ENCODE measurements at regions of chr11 and their contacts with region 1.

Region 1: DNA sequence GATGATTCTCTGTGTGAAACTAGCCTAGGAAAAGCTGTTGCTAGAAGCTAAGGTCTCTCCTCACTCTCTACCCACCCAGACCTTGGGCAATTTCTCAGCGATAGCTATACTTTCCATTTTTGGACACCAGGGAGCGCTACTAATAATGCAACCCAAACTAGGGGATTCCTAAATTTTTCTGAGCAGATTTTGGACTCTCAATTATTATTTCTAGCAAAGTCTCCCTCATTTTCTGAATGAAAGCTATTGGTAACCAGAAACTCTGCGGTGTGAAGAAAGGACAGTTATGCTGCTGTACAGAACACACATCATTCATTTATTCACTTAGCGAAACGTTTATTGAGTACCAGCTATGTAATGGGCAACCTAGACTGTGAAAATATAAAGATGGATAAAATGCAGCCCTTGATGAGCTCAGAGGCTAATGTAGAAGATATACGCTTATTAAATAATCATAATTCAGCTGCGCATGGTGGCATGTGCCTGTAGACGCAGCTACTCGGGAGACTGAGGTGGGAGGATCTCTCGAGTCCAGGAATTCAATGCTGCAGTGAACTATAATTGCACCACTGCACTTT is 6.1 kb upstream of the STIM1 start:
- DNase-seq: peak; percentile 66
- H3K4me3 Mint-ChIP-seq: no peak overlapping the region
- H3K27ac Mint-ChIP-seq: no peak overlapping the region
- H3K4me1 Mint-ChIP-seq: peaks cover 5% of the 10 kb centered on the region
- H3K27me3 Mint-ChIP-seq: peaks cover 10% of the 10 kb centered on the region
- CTCF ChIP-seq: peak; percentile 52

Region 2: DNA sequence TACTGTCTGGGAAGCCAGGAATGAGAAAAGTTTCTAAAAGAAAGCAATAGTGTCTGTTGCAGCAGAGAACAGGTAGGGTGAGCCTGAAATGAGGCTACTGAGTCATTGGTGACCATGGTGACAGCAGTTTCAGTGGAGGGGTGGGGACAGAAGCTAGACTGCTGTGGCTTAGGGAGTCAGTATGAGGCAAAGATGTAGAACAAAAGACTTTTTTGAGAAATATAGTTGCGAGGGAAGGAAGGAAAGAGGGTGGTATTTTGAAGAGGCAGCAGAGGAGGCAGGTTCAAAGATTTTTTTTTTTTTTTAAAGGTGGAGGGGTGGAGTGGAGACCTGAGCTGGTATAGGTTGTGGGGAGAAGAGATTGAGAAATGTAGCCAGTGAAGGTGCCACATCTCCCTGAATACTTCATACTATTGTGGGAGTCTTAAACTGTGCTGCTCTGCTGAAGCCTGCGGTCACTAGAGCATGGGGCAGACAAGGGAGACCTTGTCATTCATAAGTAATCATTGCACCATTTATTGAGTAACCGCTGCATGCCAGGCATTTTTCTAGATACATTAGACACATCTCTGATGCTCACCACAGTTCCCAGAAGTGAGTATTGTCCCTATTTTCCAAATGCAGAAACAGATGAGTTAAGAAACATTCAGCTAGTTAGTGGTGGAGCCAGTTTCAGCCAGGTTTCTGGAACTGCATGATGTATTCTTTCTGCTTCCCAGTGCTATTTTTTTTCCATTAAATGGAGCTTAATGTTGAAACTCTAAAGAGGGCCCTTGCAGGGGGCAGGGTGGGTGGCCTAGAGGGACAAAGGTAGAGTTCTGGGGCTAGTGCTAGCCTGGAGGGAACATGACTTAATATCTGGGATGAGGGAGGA is 55.9 kb after region 1 on chr11:
- CTCF ChIA-PET with region 1: interaction called, 46 read pairs
- POLR2A ChIA-PET with region 1: interaction called, 22 read pairs
- intact Hi-C with region 1: loop called (anchors 2 kb)
- DNase-seq: peak; percentile 89
- H3K4me3 Mint-ChIP-seq: peak overlapping the region; percentile 28
- H3K27ac Mint-ChIP-seq: peak overlapping the region; percentile 67
- H3K4me1 Mint-ChIP-seq: peaks cover 30% of the 10 kb centered on the region
- H3K27me3 Mint-ChIP-seq: no peaks in the 10 kb centered on the region
- CTCF ChIP-seq: no peak

Region 3: GRCh38 chr11:4025248-4025966 is 176.0 kb after region 1 on chr11:
- CTCF ChIA-PET with region 1: interaction called, 10 read pairs
- POLR2A ChIA-PET with region 1: no interaction called
- intact Hi-C with region 1: no loop called
- DNase-seq: peak; percentile 41
- H3K4me3 Mint-ChIP-seq: no peak overlapping the region
- H3K27ac Mint-ChIP-seq: peak overlapping the region; percentile 29
- H3K4me1 Mint-ChIP-seq: peaks cover 21% of the 10 kb centered on the region
- H3K27me3 Mint-ChIP-seq: no peaks in the 10 kb centered on the region
- CTCF ChIP-seq: no peak

Region 4: DNA sequence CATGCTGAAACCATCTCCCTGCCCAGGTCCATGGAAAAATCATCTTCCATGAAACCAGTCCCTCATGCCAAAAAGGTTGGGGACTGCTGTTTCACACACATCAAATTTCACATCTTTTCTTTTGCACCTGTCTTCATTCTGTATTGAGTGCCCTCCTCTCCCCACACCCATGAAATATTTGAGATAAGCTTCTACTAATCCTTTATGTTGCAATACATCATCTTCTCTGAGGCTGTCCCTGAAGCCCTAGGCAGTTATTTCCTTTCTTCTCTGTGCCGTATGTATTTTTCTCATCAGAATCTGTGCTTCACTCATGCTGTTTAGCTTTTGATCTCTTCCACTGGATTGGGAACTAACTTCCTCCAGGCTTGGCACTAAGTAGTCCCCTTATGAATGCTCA is 205.3 kb after region 1 on chr11:
- CTCF ChIA-PET with region 1: interaction called, 74 read pairs
- POLR2A ChIA-PET with region 1: interaction called, 9 read pairs
- intact Hi-C with region 1: no loop called
- DNase-seq: no peak
- H3K4me3 Mint-ChIP-seq: no peak overlapping the region
- H3K27ac Mint-ChIP-seq: no peak overlapping the region
- H3K4me1 Mint-ChIP-seq: no peaks in the 10 kb centered on the region
- H3K27me3 Mint-ChIP-seq: no peaks in the 10 kb centered on the region
- CTCF ChIP-seq: no peak

Region 5: GRCh38 chr11:4087551-4087950 is 238.2 kb after region 1 on chr11:
- CTCF ChIA-PET with region 1: interaction called, 31 read pairs
- POLR2A ChIA-PET with region 1: interaction called, 5 read pairs
- intact Hi-C with region 1: no loop called
- DNase-seq: no peak
- H3K4me3 Mint-ChIP-seq: no peak overlapping the region
- H3K27ac Mint-ChIP-seq: no peak overlapping the region
- H3K4me1 Mint-ChIP-seq: no peaks in the 10 kb centered on the region
- H3K27me3 Mint-ChIP-seq: no peaks in the 10 kb centered on the region
- CTCF ChIP-seq: peak; percentile 7